ENCODE measurements at regions of chr1 and their contacts with region 1.

Region 1: GRCh38 chr1:109718491-109718890 is 6.4 kb downstream of the GSTM5 start:
- DNase-seq: no peak
- ATAC-seq: peak; percentile 53

Region 2: GRCh38 chr1:109762821-109763645 is 44.5 kb after region 1 on chr1:
- intact Hi-C with region 1: loop called (anchors 10 kb)
- DNase-seq: peak; percentile 42
- ATAC-seq: no peak

Region 3: GRCh38 chr1:109895720-109896504 is 177.4 kb after region 1 on chr1:
- intact Hi-C with region 1: no loop called
- DNase-seq: peak; percentile 69
- ATAC-seq: peak; percentile 54

Measured in Right ventricle myocardium superior (tissue), 1 donor.